HCT116 (cell line): ENCODE measurements at regions of chr2 and their contacts with region 1.

Region 1: GRCh38 chr2:187842978-187843847 is 289.0 kb upstream of the TFPI start:
- DNase-seq: peak; percentile 53
- ATAC-seq: peak; percentile 81
- H3K4me3 ChIP-seq: no peak overlapping the region
- H3K27ac ChIP-seq: no peak overlapping the region
- H3K4me1 ChIP-seq: no peaks in the 10 kb centered on the region
- H3K27me3 ChIP-seq: no peaks in the 10 kb centered on the region
- CTCF ChIP-seq: peak; percentile 54 to 78 (median 68)
- POLR2A ChIP-seq: no peak
- RAD21 ChIP-seq: peak; percentile 87

Region 2: DNA sequence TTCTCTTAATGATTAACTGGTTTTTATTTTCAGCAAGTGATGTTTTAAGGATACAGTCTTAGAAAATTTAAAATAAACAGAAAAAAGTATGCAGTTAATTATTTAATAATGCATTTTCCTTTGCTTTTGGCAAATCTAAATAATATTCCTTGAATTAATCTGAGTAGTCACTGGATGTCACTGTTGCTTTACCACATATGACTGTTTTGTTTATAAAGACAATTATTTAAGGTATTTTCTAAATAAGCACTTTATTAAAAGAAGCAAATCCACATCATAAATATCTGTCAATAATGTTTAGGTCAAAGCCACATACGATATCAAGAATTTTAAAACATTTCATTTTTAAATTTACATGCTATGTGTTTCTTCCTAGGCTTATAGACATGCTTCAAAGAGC is 248.4 kb before region 1 on chr2:
- CTCF ChIA-PET with region 1: interaction called, 13 read pairs
- POLR2A ChIA-PET with region 1: no interaction called
- RAD21 ChIA-PET with region 1: no interaction called
- intact Hi-C with region 1: loop called (anchors 5 kb)
- DNase-seq: no peak
- ATAC-seq: no peak
- H3K4me3 ChIP-seq: no peak overlapping the region
- H3K27ac ChIP-seq: no peak overlapping the region
- H3K4me1 ChIP-seq: no peaks in the 10 kb centered on the region
- H3K27me3 ChIP-seq: no peaks in the 10 kb centered on the region
- CTCF ChIP-seq: peak in 1 of 3 experiments; percentile 20; a peak in 2 of 6 replicates
- POLR2A ChIP-seq: no peak
- RAD21 ChIP-seq: peak; percentile 58

Region 3: GRCh38 chr2:187803816-187804215 is 39.4 kb before region 1 on chr2:
- CTCF ChIA-PET with region 1: no interaction called
- POLR2A ChIA-PET with region 1: no interaction called
- RAD21 ChIA-PET with region 1: no interaction called
- intact Hi-C with region 1: no loop called
- DNase-seq: no peak
- ATAC-seq: no peak
- H3K4me3 ChIP-seq: no peak overlapping the region
- H3K27ac ChIP-seq: no peak overlapping the region
- H3K4me1 ChIP-seq: no peaks in the 10 kb centered on the region
- H3K27me3 ChIP-seq: no peaks in the 10 kb centered on the region
- CTCF ChIP-seq: no peak
- POLR2A ChIP-seq: no peak
- RAD21 ChIP-seq: no peak

Region 4: DNA sequence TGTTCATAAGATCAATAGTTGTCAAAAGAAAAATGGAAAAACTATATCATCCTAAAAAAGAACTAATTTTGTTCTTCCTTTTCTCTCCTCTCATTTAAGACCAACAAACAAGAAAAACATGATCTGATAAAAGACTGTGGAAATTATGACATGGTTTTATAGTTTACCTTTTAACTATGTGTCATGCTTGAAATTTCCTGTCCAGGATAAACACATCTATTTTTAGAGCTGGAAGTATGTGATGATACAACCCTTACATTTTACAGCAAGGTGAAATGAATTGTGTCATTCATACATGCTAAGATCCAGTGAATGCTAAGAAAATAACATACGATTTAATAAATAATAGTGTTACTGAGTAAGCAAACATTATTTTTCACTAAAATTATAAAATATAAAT is 538.4 kb after region 1 on chr2:
- CTCF ChIA-PET with region 1: no interaction called
- POLR2A ChIA-PET with region 1: no interaction called
- RAD21 ChIA-PET with region 1: no interaction called
- intact Hi-C with region 1: loop called (anchors 10 kb)
- DNase-seq: peak; percentile 83
- ATAC-seq: peak; percentile 56
- H3K4me3 ChIP-seq: peak overlapping the region; percentile 14 to 41; a peak in 2 of 4 replicates
- H3K27ac ChIP-seq: peak overlapping the region; percentile 79; the same call in 1 of the 2 replicates
- H3K4me1 ChIP-seq: peaks cover 47 to 57% of the 10 kb centered on the region in 2 experiments
- H3K27me3 ChIP-seq: no peaks in the 10 kb centered on the region
- CTCF ChIP-seq: no peak
- POLR2A ChIP-seq: no peak
- RAD21 ChIP-seq: peak; percentile 44

Region 5: DNA sequence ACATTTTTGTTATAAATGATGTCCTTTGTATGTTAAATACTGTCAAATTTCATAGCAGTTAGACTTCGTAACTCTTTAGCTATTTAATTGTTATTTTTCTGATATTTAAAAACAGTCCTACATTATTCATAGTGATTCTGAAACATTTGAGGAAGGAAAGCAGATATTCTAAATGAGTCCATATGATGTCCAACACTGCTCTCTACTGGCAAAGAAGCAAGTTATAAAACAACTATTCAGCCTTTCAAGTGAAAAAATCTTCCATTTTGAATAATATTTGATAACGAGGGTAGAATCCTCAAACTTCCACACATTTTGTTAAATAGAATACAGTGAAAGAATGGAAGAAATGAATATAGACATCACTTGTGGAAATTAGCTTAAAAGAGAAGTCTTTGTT is 669.2 kb after region 1 on chr2:
- CTCF ChIA-PET with region 1: no interaction called
- POLR2A ChIA-PET with region 1: no interaction called
- RAD21 ChIA-PET with region 1: interaction called in 1 of 2 experiments, 4 read pairs
- intact Hi-C with region 1: loop called (anchors 2 kb)
- DNase-seq: no peak
- ATAC-seq: peak; percentile 60
- H3K4me3 ChIP-seq: no peak overlapping the region
- H3K27ac ChIP-seq: no peak overlapping the region
- H3K4me1 ChIP-seq: peaks cover 0 to 7% of the 10 kb centered on the region in 2 experiments; a peak in 1 of 4 replicates
- H3K27me3 ChIP-seq: no peaks in the 10 kb centered on the region
- CTCF ChIP-seq: peak; percentile 42 to 71 (median 61); a peak in 5 of 6 replicates
- POLR2A ChIP-seq: no peak
- RAD21 ChIP-seq: peak; percentile 89

Region 6: DNA sequence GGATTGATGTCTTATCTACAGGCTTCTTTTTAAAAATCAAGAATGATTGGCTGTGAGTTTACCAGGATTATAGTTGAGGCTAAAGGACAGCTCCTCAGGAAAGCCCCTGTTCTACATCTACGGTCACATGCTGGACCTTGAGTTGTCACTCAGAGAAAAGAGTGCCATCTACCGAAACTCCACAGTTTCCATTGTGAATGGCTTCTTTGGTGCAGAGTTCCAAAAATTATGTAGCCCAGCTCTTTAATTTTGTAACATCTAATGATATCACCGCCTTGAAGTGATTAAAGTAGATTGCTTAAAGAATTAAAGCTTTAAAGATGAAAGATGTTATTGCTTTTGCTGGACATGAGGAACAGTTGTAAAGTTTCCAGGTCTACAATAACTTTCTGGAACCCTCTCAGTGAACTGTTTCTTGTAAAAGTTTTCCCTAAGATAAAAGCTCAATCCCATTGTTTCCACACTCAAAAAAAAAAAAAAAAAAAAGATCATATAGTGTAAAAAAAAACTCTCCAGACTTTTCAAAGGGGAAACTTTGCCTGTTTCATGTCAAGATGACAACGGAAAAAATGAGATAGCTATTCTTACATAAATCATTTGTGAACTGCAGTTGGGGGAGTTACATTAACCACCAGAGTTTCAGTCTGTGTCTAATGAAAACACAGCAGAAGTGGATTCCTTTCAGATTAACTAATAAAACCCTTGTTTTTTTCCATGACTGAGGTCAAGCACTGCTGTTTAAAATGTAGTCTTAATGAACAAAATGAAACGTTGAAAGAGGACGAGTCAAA is 1135.3 kb after region 1 on chr2:
- CTCF ChIA-PET with region 1: no interaction called
- POLR2A ChIA-PET with region 1: no interaction called
- RAD21 ChIA-PET with region 1: no interaction called
- intact Hi-C with region 1: loop called (anchors 10 kb)
- DNase-seq: peak; percentile 31
- ATAC-seq: peak; percentile 92
- H3K4me3 ChIP-seq: no peak overlapping the region; a peak in 1 of 4 replicates
- H3K27ac ChIP-seq: no peak overlapping the region
- H3K4me1 ChIP-seq: peaks cover 0 to 18% of the 10 kb centered on the region in 2 experiments; a peak in 2 of 4 replicates
- H3K27me3 ChIP-seq: no peaks in the 10 kb centered on the region
- CTCF ChIP-seq: peak; percentile 42 to 57 (median 46); a peak in 4 of 6 replicates
- POLR2A ChIP-seq: no peak
- RAD21 ChIP-seq: peak; percentile 78